GM13977 (cell line): ENCODE measurements at regions of chr11 and their contacts with region 1.

Region 1: DNA sequence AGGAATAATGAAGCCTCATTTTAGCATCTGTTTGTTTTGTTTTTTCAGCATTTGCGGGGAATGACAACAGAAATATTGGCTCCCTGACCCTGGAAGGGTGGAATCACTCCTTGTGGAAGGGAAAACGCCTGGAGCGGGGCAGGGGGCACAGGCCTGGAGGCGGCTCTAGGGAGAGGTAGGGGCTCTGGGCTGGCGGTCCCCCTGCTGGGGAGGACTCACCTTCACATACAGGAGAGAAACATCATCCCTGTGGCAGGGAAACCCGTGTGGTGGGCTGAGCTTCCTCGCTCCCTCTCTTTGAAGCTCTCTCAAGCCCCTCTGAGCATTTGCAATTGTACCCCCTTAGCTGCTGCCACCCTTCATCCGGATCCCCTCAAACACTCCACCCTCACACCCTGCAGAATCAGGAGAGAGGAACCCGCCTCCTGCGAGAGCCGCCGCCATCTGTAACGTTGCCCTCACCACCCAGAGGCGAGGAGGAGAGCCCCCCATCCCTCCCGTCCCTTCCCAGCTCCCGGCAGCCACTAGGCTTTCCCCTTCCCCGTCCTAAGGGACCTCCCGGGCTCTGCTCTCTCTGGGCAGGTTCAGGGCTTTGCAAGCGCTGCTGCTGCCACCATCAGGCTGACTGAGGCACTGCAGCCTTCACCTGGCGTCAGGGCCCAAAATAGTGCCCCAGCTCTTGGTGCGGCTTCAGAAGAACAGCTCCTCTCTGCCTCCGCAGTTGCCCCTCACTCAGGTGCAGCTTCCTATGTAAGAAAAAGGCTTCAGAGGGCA is 10.4 kb downstream of the KIRREL3 start:
- DNase-seq: peak; percentile 77
- CTCF ChIP-seq: peak; percentile 99

Region 2: DNA sequence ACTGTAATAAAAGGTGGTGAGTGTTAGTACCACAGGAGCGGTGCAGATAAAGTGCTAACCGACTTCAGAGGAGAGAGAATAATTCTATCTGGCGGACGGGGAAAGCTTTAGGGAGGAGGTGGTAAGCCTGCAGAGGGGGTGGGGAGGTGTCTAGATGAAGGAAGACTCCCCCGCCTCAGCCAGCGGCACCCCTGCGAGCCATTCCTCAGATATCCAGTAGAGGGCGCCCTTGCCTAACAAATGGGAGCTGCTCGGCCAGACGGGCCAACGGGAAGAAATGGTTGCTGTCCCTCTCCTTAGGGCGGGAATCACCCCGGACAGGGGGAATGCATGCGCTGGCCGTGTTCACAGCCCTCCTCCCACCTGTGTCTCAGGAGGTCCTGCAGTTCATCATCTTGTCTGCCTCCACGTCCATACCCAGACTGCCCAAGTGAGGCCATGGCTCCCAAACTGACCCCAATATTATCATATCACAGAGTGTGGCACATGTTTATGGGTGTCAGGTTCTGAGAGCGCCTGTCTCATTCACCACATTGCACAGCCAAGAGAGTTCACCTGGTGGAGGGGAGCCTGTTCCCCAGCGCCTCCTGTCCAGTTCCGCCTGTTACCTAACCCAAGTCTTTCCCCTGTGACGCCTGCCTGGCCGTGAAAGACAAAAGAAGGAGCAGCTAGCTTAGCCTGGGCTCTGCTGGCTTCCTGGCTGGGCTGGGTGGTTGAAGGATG is 549.2 kb before region 1 on chr11:
- in situ Hi-C with region 1: loop called (anchors 25 kb)
- DNase-seq: peak; percentile 92
- CTCF ChIP-seq: peak; percentile 97

Region 3: DNA sequence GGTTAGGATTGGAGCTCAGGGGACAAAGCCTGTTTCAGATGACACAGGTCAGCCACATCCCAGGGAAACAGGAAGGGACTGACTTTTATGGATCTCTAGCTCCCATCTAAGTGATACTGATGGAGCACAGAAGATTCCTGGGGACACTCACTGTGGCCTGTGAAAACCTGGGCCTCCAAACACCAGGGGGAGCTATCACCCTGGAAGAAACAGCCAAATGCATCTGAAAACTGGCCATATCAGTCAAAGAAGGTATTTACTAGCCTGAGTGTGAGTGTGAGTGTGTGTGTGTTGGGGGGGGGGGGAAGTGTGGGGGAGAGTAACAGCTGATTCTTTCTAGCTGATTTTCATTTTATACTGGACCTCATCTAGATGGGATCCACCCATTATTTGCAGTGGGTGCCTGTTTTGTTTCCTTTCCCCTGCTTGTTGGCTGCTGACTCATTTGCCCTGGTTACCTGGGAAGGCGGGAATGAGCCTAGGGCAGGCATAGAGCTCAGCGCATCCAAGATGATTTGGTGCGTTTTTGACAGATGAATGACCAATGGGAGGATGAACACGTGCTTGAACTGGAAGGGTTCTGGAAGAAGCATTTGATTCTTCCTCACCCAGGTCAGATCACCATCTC is 273.6 kb before region 1 on chr11:
- in situ Hi-C with region 1: loop called (anchors 10 kb)
- DNase-seq: peak; percentile 72
- CTCF ChIP-seq: peak; percentile 80

Region 4: GRCh38 chr11:126874831-126875230 is 115.3 kb before region 1 on chr11:
- in situ Hi-C with region 1: no loop called
- DNase-seq: no peak
- CTCF ChIP-seq: peak; percentile 23

Region 5: DNA sequence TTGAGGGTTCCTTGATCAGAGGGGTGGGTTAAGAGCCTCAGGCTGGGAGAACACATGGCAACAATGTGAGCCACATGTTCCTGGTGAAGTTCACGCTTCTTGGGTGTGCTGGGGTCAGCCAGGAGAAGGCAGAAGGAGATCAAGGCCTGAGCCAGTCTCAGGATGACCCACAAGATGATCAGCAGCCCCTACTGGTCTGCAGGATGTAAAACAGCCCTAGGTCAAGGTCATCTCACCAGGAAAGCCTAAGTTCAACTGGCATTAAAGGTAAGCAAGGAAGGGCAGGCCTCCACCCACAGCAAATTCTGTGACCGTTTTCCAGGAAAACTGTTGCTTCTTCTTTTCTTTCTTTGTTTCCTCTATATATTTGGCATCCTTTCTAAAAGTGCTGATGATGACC is 167.1 kb after region 1 on chr11:
- in situ Hi-C with region 1: no loop called
- DNase-seq: no peak
- CTCF ChIP-seq: no peak

Region 6: GRCh38 chr11:127281534-127281933 is 291.4 kb after region 1 on chr11:
- in situ Hi-C with region 1: no loop called
- DNase-seq: no peak
- CTCF ChIP-seq: no peak